Left cardiac atrium (tissue), 4 donors: ENCODE measurements at regions of chr11 and their contacts with region 1.

Region 1: DNA sequence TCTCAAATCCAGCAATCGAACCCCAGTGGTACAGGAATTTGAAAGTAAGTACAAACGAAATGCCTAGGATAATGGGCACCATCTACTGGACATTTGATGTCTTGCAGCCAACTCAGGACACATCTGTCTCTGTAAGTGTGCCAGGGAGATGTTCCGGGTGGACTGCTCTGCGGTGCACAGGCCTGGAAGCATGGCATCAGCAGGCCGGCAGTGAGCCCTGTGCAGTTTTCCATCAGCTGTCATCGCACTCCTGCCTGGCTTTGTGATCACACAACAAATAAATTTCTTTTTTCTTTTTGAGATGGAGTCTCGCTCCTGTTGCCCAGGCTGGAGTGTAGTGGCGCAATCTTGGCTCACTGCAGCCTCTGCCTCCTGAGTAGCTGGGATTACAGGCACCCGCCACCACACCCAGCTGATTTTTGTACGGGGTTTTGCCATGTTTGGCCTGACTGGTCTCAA is 71.0 kb downstream of the JAM3 start:
- DNase-seq: peak; percentile 64
- ATAC-seq: peak; percentile 79 to 86

Region 2: GRCh38 chr11:133927690-133928627 is 211.9 kb before region 1 on chr11:
- intact Hi-C with region 1: loop called (anchors 5 to 10 kb)
- DNase-seq: peak; percentile 77
- ATAC-seq: peak; percentile 82 to 87

Region 3: GRCh38 chr11:133934599-133935550 is 205.0 kb before region 1 on chr11:
- intact Hi-C with region 1: loop called in 1 of 2 experiments (anchors 10 kb)
- DNase-seq: peak; percentile 86
- ATAC-seq: peak; percentile 86 to 95